Gastrocnemius medialis (tissue), 4 donors: ENCODE measurements at regions of chr12 and their contacts with region 1.

Region 1: GRCh38 chr12:47715393-47715876 is 9.6 kb upstream of the RPAP3 start:
- DNase-seq: peak; percentile 74 to 82
- ATAC-seq: peak; percentile 71 to 77
- H3K4me3 ChIP-seq: peak overlapping the region in 2 of 4 donors; percentile 5 to 6
- H3K27ac ChIP-seq: peak overlapping the region; percentile 62 to 85 (median 80)
- H3K4me1 ChIP-seq: peaks cover 32 to 48% of the 10 kb centered on the region in 2 donors
- H3K27me3 ChIP-seq: no peaks in the 10 kb centered on the region
- CTCF ChIP-seq: peak; percentile 82 to 91 (median 86)
- POLR2A ChIP-seq: no peak

Region 2: DNA sequence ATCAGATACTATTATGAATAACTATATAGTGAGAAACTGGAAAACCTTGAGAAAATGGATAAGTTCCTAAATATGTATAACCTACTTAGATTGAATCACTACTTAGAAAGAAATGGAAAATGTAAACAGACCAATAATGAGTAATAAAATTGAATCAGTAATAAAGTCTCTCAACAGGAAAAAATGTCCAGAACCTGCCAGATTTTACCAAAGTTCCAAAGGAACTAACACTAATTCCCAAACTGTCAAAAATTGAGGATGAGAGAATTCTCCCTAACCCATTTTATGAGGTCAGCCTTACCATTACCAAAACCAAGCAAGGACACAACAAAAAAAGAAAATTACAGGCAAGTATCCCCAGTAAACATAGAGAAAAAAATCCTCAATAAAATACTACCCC is 281.6 kb before region 1 on chr12:
- in situ Hi-C with region 1: no loop called
- intact Hi-C with region 1: no loop called
- DNase-seq: no peak
- ATAC-seq: no peak
- H3K4me3 ChIP-seq: no peak overlapping the region
- H3K27ac ChIP-seq: no peak overlapping the region
- H3K4me1 ChIP-seq: no peaks in the 10 kb centered on the region
- H3K27me3 ChIP-seq: no peaks in the 10 kb centered on the region
- CTCF ChIP-seq: no peak
- POLR2A ChIP-seq: no peak

Region 3: DNA sequence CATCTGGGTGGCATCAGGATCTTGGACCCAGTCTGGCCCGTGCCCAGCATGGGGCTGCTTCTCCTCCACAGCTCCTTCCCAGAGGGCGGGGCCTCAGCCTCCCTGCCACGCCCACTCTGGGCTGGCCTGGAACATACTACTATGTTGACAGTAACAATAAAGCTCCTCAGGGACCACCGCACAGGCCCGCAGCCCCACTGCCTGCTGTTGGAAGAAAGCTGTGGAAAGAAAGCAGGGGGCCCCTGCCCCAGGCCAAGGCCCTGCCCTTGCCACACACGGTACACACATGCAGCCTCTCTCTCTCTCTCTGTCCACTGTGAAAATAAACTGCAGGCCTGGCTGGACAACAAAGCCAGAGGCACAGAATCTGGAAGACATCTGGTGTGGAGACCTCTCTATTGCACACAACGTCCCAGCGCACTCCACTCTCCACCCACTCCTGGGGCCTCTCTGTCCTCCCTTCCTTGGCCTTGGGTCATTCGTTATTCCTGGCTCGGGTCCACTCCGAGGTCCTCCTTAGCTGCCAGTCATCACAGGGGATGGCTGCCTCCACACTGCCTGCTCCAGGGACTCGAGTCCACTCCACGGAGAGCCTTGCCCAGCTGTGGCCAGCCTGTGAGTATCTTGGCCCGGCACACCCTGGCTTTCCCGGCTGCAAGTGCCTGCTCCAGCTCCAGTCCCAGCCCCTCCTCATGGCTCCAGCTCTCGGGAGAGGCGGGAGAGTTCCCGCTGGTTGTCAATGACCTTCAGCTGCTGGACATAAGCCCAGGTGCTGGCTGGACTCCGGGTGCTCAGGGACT is 21.6 kb after region 1 on chr12:
- in situ Hi-C with region 1: no loop called
- intact Hi-C with region 1: loop called (anchors 1 kb)
- DNase-seq: peak; percentile 51 to 82
- ATAC-seq: peak; percentile 67 to 74
- H3K4me3 ChIP-seq: peak overlapping the region in 3 of 4 donors; percentile 10 to 16 (median 13)
- H3K27ac ChIP-seq: peak overlapping the region; percentile 61 to 79 (median 64)
- H3K4me1 ChIP-seq: peaks cover 47 to 57% of the 10 kb centered on the region in 2 donors
- H3K27me3 ChIP-seq: no peaks in the 10 kb centered on the region
- CTCF ChIP-seq: no peak
- POLR2A ChIP-seq: no peak

Region 4: GRCh38 chr12:47758834-47759690 is 43.6 kb after region 1 on chr12 and contains the start of gene RAPGEF3:
- in situ Hi-C with region 1: no loop called
- intact Hi-C with region 1: loop called (anchors 5 kb)
- DNase-seq: peak; percentile 66 to 73
- ATAC-seq: peak; percentile 89
- H3K4me3 ChIP-seq: peak within 1 kb of the TSS; percentile 62 to 91 (median 72)
- H3K27ac ChIP-seq: peak within 1 kb of the TSS; percentile 50 to 90 (median 78)
- H3K4me1 ChIP-seq: peaks cover 16 to 21% of the 10 kb centered on the region in 2 donors
- H3K27me3 ChIP-seq: no peaks in the 10 kb centered on the region
- CTCF ChIP-seq: peak; percentile 28 to 70 (median 63)
- POLR2A ChIP-seq: peak; percentile 7 to 19
- total RNA-seq, gene RAPGEF3: 17.0 to 27.0 (median 22.3) TPM

Region 5: DNA sequence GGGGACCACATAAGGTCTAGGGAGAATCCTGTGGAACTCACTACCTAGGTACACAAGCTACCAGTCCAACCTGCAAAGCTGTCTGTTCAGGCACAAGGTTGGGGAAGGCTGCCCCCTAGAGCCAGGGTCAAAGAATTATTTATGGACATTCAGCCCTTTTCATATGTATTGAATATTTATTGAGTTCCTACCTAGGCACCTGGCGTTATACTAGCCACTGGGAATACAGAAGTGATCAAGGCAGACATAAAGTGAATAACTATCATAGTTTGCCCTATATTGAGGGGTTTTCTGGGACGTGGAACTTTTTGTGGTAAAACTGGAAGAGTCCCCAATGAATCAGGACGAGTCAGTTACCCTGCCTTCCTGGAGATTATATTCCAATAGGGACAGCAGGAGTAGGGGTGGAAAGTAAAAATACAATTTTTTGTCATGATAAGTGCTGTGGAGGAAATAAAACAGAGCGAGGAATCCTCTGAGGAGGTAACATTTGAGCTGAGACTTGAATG is 51.8 kb after region 1 on chr12:
- in situ Hi-C with region 1: loop called in 2 of 4 experiments (anchors 10 kb)
- intact Hi-C with region 1: loop called (anchors 2 kb)
- DNase-seq: no peak
- ATAC-seq: peak; percentile 52 to 60
- H3K4me3 ChIP-seq: no peak overlapping the region
- H3K27ac ChIP-seq: no peak overlapping the region
- H3K4me1 ChIP-seq: peaks cover 0 to 7% of the 10 kb centered on the region in 2 donors
- H3K27me3 ChIP-seq: no peaks in the 10 kb centered on the region
- CTCF ChIP-seq: peak; percentile 45 to 75 (median 57)
- POLR2A ChIP-seq: no peak

Region 6: DNA sequence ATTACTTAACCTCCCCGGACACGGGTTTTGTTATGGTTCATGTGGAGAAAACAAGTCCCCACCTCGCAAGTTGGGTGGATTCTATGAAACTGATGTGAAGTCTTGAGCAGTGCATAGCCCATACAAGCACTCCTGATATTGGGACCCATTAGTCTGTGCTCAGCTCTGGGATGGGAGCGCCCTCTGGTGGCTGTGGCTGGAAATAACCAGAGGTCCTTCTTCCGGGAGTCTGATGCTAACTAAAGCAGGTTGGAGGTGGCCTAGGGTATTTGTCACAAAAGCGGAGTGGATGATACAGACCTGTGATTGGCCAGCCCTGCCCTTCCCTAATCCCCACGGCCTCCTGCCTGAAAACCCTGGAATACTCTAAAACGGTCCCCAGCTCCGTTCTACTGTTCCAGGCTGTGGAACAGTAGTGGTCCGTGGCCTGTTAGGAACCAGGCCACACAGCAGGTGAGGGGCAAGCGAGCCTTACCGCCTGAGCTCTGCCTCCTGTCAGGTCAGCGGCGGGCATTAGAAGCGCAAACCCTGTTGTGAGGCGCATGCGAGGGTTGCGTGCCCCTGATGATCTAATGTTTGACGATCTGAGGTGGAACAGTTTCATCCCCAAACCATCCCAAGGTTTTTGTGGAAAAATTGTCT is 64.0 kb after region 1 on chr12:
- in situ Hi-C with region 1: loop called (anchors 5 to 10 kb)
- intact Hi-C with region 1: loop called (anchors 1 kb)
- DNase-seq: peak; percentile 69 to 81
- ATAC-seq: peak; percentile 74 to 83
- H3K4me3 ChIP-seq: no peak overlapping the region
- H3K27ac ChIP-seq: no peak overlapping the region
- H3K4me1 ChIP-seq: peaks cover 47 to 55% of the 10 kb centered on the region in 2 donors
- H3K27me3 ChIP-seq: no peaks in the 10 kb centered on the region
- CTCF ChIP-seq: peak; percentile 89 to 95 (median 93)
- POLR2A ChIP-seq: no peak

Region 7: GRCh38 chr12:48197971-48198671 is 482.7 kb after region 1 on chr12:
- in situ Hi-C with region 1: no loop called
- intact Hi-C with region 1: loop called (anchors 10 kb)
- DNase-seq: peak; percentile 98 to 99
- ATAC-seq: peak; percentile 92 to 96
- H3K4me3 ChIP-seq: peak overlapping the region; percentile 88 to 94 (median 92)
- H3K27ac ChIP-seq: peak overlapping the region; percentile 97 to 100 (median 99)
- H3K4me1 ChIP-seq: peaks cover 20% of the 10 kb centered on the region in 2 donors
- H3K27me3 ChIP-seq: no peaks in the 10 kb centered on the region
- CTCF ChIP-seq: no peak
- POLR2A ChIP-seq: peak; percentile 97 to 98